ENCODE measurements at regions of chr9 and their contacts with region 1.

Region 1: DNA sequence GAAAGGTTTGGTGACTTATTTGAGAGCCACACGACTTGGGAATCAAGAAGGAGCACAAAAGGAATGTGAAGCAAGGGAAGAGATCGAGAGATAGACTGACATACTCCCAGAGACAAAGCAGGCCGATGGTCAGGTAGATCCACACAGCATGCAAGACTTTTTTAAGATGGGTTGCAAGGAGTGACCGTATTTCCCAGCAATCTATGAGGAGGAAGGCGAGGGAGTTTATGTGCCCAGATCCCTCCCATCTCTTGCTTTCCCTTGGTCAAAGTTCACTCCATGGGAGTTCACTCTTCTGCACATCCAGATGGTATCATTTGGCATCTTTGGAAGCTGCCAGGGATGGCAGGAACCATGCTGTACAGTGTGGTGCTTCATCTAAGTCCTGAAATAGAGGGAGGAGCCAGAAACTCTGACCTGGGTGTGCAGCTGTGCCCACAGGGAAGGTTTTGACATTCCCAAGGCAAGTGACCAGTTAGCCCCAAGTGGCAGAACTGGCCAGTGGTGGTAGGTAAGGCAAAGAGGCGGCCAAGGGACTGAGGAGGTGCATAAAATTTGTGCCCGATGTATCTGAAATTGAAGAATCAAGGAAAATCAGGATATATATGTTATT is 149.0 kb downstream of the RMI1 start:
- DNase-seq: no peak
- ATAC-seq: no peak
- H3K4me3 Mint-ChIP-seq: no peak overlapping the region
- H3K27ac Mint-ChIP-seq: no peak overlapping the region
- H3K4me1 Mint-ChIP-seq: no peaks in the 10 kb centered on the region
- H3K27me3 Mint-ChIP-seq: peaks cover 6% of the 10 kb centered on the region

Region 2: DNA sequence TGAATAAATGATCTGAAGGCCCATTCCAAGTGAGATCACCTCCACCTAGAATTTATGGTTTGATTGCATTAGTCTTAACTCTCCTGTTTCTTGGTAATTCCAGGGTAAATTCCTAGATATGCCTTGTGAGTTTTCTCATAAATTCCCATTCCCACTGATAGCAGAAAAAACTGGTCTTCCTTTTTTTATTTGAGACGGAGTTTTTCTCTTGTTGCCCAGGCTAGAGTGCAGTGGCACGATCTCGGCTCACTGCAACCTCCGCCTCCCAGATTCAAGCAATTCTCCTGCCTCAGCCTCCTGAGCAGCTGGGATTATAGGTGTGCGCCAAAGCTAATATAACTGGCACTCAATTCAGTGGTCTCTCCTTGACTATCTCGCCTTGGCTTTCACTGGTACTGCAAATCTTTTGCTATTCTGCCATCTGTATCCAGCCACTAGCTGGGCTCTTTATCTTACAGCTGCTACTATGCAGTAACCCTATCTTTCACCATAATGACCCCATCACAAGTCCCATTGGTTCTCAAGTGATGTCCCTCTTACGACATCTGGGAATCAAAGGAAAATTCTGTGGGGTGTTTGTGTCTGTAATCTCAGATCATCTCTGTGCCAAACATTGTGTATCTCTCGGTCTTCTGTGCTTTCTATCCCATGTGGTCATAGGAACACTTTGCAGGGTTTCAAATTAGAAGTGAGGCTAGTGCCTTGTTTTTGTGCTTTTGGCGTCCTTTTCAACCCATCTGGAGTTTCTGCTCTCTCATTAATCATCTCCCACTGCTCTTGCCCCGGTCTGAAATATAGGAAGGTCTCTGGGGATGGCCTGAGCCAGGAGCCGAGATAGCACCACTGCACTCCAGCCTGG is 164.1 kb before region 1 on chr9:
- CTCF ChIA-PET with region 1: no interaction called
- POLR2A ChIA-PET with region 1: no interaction called
- intact Hi-C with region 1: no loop called
- DNase-seq: no peak
- ATAC-seq: peak; percentile 27
- H3K4me3 Mint-ChIP-seq: no peak overlapping the region
- H3K27ac Mint-ChIP-seq: peak overlapping the region; percentile 74
- H3K4me1 Mint-ChIP-seq: peaks cover 5% of the 10 kb centered on the region
- H3K27me3 Mint-ChIP-seq: no peaks in the 10 kb centered on the region

Region 3: GRCh38 chr9:84079994-84080393 is 49.6 kb before region 1 on chr9:
- CTCF ChIA-PET with region 1: no interaction called
- POLR2A ChIA-PET with region 1: no interaction called
- intact Hi-C with region 1: loop called in 1 of 2 experiments (anchors 5 kb)
- DNase-seq: no peak
- ATAC-seq: no peak
- H3K4me3 Mint-ChIP-seq: no peak overlapping the region
- H3K27ac Mint-ChIP-seq: no peak overlapping the region
- H3K4me1 Mint-ChIP-seq: no peaks in the 10 kb centered on the region
- H3K27me3 Mint-ChIP-seq: peaks cover 8% of the 10 kb centered on the region

Region 4: DNA sequence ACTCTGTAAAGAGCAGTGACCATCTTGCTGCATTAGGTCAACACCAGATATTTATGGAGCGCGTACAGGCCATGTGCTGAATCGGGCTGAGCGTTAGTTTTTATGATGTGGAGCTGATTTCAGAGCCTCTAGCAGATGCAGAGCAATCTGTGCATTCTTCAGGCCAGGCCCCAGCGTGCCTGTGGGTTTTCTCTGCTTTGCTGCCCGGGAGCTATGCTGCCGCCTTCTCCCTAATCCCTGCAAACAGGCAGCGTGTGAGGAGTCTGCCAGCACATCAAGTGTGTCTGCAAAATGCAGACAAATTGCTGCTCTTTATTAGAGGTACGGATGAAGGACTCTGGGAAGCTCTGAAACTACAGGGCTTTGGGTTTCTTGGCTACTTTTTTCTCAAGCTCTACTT is 709.9 kb after region 1 on chr9:
- CTCF ChIA-PET with region 1: no interaction called
- POLR2A ChIA-PET with region 1: no interaction called
- intact Hi-C with region 1: no loop called
- DNase-seq: no peak
- ATAC-seq: no peak
- H3K4me3 Mint-ChIP-seq: no peak overlapping the region
- H3K27ac Mint-ChIP-seq: no peak overlapping the region
- H3K4me1 Mint-ChIP-seq: no peaks in the 10 kb centered on the region
- H3K27me3 Mint-ChIP-seq: peaks cover 9% of the 10 kb centered on the region

Measured in activated CD4-positive, alpha-beta T cell treated with anti-CD3 and anti-CD28 coated beads for 36 hours (primary cell).